Heart left ventricle (tissue), 16 donors: ENCODE measurements at regions of chr10 and their contacts with region 1.

Region 1: GRCh38 chr10:101569838-101570766 is 18.0 kb downstream of the POLL start:
- DNase-seq: peak; percentile 71 to 91 (median 85)
- ATAC-seq: peak; percentile 21 to 93 (median 81)
- H3K4me3 ChIP-seq: peak overlapping the region; percentile 17 to 70 (median 54)
- H3K27ac ChIP-seq: peak overlapping the region in 2 of 12 donors; percentile 15 to 23
- H3K4me1 ChIP-seq: peaks cover 0 to 28% (median 16%) of the 10 kb centered on the region in 12 donors
- H3K27me3 ChIP-seq: peaks cover 10 to 49% (median 39%) of the 10 kb centered on the region in 9 donors
- CTCF ChIP-seq: peak; percentile 78 to 98 (median 90)
- POLR2A ChIP-seq: no peak

Region 2: DNA sequence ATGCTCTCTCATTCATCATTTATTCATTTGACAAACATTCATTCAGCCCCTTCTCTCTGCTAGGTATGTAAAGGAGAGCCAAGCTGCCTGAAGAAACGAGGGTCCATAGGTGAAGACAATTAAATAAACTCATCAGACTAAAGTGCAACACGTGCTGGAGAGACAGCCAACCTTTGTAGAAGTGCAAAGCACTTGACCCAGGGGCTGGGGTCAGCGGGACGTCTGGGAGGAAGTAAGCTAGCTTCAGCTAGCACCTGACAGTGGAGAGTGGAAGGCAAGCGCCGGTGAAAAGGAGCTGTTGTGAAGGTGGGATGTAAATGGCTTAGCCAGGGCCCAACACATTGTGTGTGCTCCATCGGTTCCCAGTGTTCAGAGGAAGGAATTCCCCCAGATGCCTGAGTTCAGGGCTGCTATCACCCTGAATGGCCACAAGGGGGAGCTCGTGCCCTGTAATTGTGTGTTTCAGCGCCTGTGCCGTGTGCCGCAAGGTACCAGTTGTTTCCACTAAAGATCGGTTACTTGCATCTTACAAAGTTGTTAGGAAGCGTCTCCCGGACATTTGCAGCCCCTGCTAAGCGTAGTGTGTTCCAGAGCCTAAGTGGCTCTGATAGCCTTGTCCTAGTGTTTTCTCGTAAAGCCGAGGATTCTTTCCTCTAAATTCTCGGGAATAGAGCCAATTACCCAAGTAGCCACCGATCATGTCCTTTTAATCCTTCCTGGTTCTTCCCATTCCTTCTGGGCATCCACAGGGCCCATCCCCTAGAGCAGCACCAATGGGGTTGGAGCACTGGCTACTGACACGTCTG is 408.4 kb before region 1 on chr10:
- intact Hi-C with region 1: loop called in 6 of 10 experiments (anchors 1 to 5 kb)
- DNase-seq: peak; percentile 58 to 71 (median 68)
- ATAC-seq: peak; percentile 69 to 93 (median 90)
- H3K4me3 ChIP-seq: peak overlapping the region in 8 of 12 donors; percentile 5 to 42 (median 34)
- H3K27ac ChIP-seq: no peak overlapping the region
- H3K4me1 ChIP-seq: peaks cover 0 to 8% (median 2%) of the 10 kb centered on the region in 12 donors
- H3K27me3 ChIP-seq: peaks cover under 1 to 83% (median 27%) of the 10 kb centered on the region in 9 donors
- CTCF ChIP-seq: peak; percentile 93 to 99 (median 96)
- POLR2A ChIP-seq: no peak

Region 3: GRCh38 chr10:101272229-101272868 is 297.8 kb before region 1 on chr10:
- intact Hi-C with region 1: loop called in 7 of 10 experiments (anchors 5 to 10 kb)
- DNase-seq: peak in 4 of 5 donors; percentile 29 to 50 (median 48)
- ATAC-seq: peak; percentile 64 to 87 (median 80)
- H3K4me3 ChIP-seq: no peak overlapping the region
- H3K27ac ChIP-seq: no peak overlapping the region
- H3K4me1 ChIP-seq: no peaks in the 10 kb centered on the region
- H3K27me3 ChIP-seq: peaks cover 0 to 25% (median 4%) of the 10 kb centered on the region in 9 donors
- CTCF ChIP-seq: peak; percentile 61 to 78 (median 72)
- POLR2A ChIP-seq: no peak

Region 4: GRCh38 chr10:101291331-101292193 is 278.5 kb before region 1 on chr10:
- intact Hi-C with region 1: loop called in 2 of 10 experiments (anchors 5 to 10 kb)
- DNase-seq: peak; percentile 50 to 78 (median 70)
- ATAC-seq: peak in 3 of 4 donors; percentile 66 to 85 (median 77)
- H3K4me3 ChIP-seq: peak overlapping the region; percentile 46 to 84 (median 62)
- H3K27ac ChIP-seq: peak overlapping the region in 9 of 12 donors; percentile 44 to 78 (median 63)
- H3K4me1 ChIP-seq: peaks cover 0 to 25% (median 8%) of the 10 kb centered on the region in 12 donors
- H3K27me3 ChIP-seq: peaks cover 5 to 80% (median 24%) of the 10 kb centered on the region in 9 donors
- CTCF ChIP-seq: peak; percentile 49 to 75 (median 64)
- POLR2A ChIP-seq: no peak

Region 5: DNA sequence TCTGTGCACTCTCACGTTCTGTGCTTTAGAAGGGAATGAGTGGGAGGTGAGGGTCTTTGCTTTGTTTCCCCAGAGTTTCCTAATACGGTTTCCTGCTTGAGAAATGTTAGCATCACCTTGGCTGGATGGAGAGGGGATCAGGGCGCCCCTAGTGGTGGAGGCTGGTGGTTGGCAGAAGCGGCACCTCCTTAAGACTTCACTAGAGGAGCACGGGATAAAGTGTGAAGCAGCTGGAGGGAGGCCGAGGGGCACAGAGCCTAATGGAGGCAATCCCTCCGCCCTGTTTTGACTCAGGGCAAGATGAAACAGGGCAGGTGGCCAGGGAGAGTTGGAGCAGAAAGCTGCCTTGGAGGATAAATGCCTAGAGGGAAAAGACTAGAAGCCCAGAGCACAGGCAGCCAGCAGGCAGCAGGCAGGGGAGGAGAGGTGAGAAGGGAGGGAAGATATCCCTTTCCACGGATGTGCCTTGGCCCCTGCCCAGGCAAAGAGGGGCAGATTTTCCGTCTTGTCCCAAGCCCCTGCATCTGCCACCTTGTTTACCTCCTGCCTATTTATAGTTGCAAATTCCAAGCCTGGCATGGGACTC is 272.1 kb before region 1 on chr10:
- intact Hi-C with region 1: loop called in 7 of 10 experiments (anchors 5 to 10 kb)
- DNase-seq: peak in 4 of 5 donors; percentile 25 to 75 (median 33)
- ATAC-seq: peak in 3 of 4 donors; percentile 25 to 48 (median 37)
- H3K4me3 ChIP-seq: no peak overlapping the region
- H3K27ac ChIP-seq: no peak overlapping the region
- H3K4me1 ChIP-seq: peaks cover 0 to 11% (median 0%) of the 10 kb centered on the region in 12 donors
- H3K27me3 ChIP-seq: peaks cover 0 to 38% (median 3%) of the 10 kb centered on the region in 9 donors
- CTCF ChIP-seq: peak; percentile 66 to 89 (median 76)
- POLR2A ChIP-seq: no peak

Region 6: DNA sequence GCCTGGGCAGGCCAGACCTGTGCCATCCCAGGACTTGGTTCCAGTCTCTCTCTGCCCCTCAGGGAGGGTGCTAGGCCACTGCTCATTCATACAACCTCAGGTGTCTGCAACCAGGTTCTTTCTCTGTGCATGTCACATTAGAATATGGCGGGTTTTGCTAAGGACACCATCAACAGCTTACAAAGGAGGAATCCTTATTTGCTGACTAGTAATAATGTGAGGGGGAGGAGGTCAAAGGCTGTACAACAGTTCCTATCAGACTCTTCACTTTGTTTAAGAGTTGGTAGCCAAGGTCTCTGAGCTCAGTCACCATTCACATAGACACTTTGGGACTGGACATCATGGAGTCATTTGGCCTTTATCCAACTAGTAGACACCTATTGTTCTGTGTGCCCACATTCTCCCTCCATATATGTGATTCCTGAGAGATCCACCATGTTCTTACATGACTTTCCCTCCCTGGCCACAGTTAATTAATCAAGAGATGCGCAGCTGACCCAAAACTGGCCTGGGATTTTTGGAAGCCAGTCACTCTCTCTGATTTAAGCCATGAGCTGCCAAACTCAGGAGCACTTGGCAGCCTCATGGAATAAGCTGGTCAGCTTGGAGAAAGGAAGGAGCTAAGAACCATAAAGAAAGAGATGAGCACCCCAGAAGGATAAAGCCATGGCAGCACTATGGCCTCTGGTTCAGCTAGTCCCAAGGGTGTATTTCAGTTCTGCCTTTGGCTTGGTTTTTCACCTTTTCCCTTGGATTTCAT is 69.2 kb after region 1 on chr10:
- intact Hi-C with region 1: no loop called
- DNase-seq: no peak
- ATAC-seq: no peak
- H3K4me3 ChIP-seq: no peak overlapping the region
- H3K27ac ChIP-seq: no peak overlapping the region
- H3K4me1 ChIP-seq: no peaks in the 10 kb centered on the region
- H3K27me3 ChIP-seq: no peaks in the 10 kb centered on the region
- CTCF ChIP-seq: no peak
- POLR2A ChIP-seq: no peak